B cell (primary cell): ENCODE measurements at regions of chr9 and their contacts with region 1.

Region 1: GRCh38 chr9:133992780-133993634 is 883 bp upstream of the VAV2 start:
- DNase-seq: peak; percentile 90
- ATAC-seq: peak; percentile 79
- H3K4me3 ChIP-seq: peak overlapping the region; percentile 31 to 86 (median 81)
- H3K4me3 Mint-ChIP-seq: peak overlapping the region; percentile 89
- H3K27ac ChIP-seq: peak overlapping the region; percentile 26 to 83
- H3K27ac Mint-ChIP-seq: peak overlapping the region; percentile 86
- H3K4me1 ChIP-seq: peaks cover 27 to 42% of the 10 kb centered on the region in 2 donors
- H3K4me1 Mint-ChIP-seq: peaks cover 30% of the 10 kb centered on the region
- H3K27me3 ChIP-seq: no peaks in the 10 kb centered on the region
- H3K27me3 Mint-ChIP-seq: no peaks in the 10 kb centered on the region
- CTCF ChIP-seq: peak; percentile 53

Region 2: GRCh38 chr9:132994410-132995120 is 998.4 kb before region 1 on chr9:
- CTCF ChIA-PET with region 1: no interaction called
- POLR2A ChIA-PET with region 1: no interaction called
- intact Hi-C with region 1: no loop called
- DNase-seq: no peak
- ATAC-seq: peak; percentile 14
- H3K4me3 ChIP-seq: no peak overlapping the region
- H3K4me3 Mint-ChIP-seq: peak overlapping the region; percentile 11
- H3K27ac ChIP-seq: no peak overlapping the region
- H3K27ac Mint-ChIP-seq: no peak overlapping the region
- H3K4me1 ChIP-seq: peaks cover 4 to 10% of the 10 kb centered on the region in 2 donors
- H3K4me1 Mint-ChIP-seq: peaks cover 13% of the 10 kb centered on the region
- H3K27me3 ChIP-seq: peaks cover 0 to 41% (median 6%) of the 10 kb centered on the region in 4 experiments
- H3K27me3 Mint-ChIP-seq: peaks cover 39% of the 10 kb centered on the region
- CTCF ChIP-seq: no peak

Region 3: GRCh38 chr9:133492061-133493021 is 500.7 kb before region 1 on chr9:
- CTCF ChIA-PET with region 1: no interaction called
- POLR2A ChIA-PET with region 1: no interaction called
- intact Hi-C with region 1: no loop called
- DNase-seq: no peak
- ATAC-seq: no peak
- H3K4me3 ChIP-seq: no peak overlapping the region
- H3K4me3 Mint-ChIP-seq: no peak overlapping the region
- H3K27ac ChIP-seq: no peak overlapping the region
- H3K27ac Mint-ChIP-seq: no peak overlapping the region
- H3K4me1 ChIP-seq: no peaks in the 10 kb centered on the region
- H3K4me1 Mint-ChIP-seq: no peaks in the 10 kb centered on the region
- H3K27me3 ChIP-seq: peaks cover 0 to 10% (median 0%) of the 10 kb centered on the region in 4 experiments
- H3K27me3 Mint-ChIP-seq: peaks cover 12% of the 10 kb centered on the region
- CTCF ChIP-seq: no peak

Region 4: DNA sequence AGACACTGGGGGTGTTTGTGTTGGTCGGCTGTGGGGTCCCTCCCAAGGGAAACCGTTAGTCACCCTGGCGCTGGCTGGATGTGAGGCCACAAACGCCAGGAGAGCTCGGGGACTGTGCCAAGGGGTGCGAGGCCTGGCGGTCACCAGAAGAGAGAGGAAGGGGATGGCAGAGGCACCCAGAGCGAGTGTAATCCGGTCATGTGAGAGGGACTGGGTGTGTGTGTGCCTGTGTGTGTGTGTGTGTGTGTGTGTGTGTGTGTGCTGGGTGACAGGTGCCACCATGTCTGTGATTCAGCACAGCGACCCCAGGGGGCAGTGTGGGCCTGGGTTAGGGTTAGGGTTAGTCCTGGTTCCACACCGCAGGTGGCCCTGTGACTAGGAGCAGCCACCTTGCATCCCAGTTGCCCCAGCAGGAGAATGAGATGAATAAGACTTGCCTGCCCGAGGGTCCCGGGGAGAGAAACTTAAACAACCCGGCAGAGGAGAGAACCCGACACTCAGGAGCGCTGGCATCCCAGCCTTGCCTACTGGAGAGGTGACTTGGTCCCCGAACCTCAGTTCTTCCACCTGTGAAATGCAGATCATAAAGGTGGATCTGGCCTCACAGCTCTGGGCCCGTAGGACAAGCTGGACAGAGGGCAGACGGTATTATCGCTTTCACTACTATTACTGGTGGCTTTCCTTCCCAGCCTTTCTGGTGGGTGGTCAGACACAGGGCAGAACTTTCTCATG is 459.9 kb before region 1 on chr9:
- CTCF ChIA-PET with region 1: no interaction called
- POLR2A ChIA-PET with region 1: no interaction called
- intact Hi-C with region 1: loop called (anchors 5 kb)
- DNase-seq: peak; percentile 65
- ATAC-seq: peak; percentile 79
- H3K4me3 ChIP-seq: no peak overlapping the region
- H3K4me3 Mint-ChIP-seq: peak overlapping the region; percentile 29
- H3K27ac ChIP-seq: no peak overlapping the region
- H3K27ac Mint-ChIP-seq: peak overlapping the region; percentile 15
- H3K4me1 ChIP-seq: peaks cover 7 to 18% of the 10 kb centered on the region in 2 donors
- H3K4me1 Mint-ChIP-seq: peaks cover 13% of the 10 kb centered on the region
- H3K27me3 ChIP-seq: peaks cover 0 to 66% (median 10%) of the 10 kb centered on the region in 4 experiments
- H3K27me3 Mint-ChIP-seq: peaks cover 29% of the 10 kb centered on the region
- CTCF ChIP-seq: no peak

Region 5: DNA sequence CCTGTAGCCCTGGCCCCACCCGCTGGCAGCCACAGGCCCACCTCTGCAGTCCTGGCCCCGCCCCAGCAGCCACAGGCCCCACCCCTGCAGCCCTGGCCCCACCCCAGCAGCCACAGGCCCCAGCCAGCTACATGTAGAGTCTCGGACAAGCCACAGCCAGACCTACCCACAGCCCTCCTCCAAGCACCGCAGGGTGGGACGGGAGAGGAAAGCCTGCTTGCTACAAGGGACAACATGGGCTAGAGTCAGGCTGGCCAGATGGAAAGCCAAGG is 205.3 kb before region 1 on chr9:
- CTCF ChIA-PET with region 1: interaction called, 561 read pairs
- POLR2A ChIA-PET with region 1: interaction called, 18 read pairs
- intact Hi-C with region 1: loop called (anchors 1 kb)
- DNase-seq: peak; percentile 70
- ATAC-seq: peak; percentile 73
- H3K4me3 ChIP-seq: peak overlapping the region in 1 of 5 experiments; percentile 23
- H3K4me3 Mint-ChIP-seq: peak overlapping the region; percentile 84
- H3K27ac ChIP-seq: peak overlapping the region; percentile 87 to 95
- H3K27ac Mint-ChIP-seq: peak overlapping the region; percentile 97
- H3K4me1 ChIP-seq: peaks cover 74 to 78% of the 10 kb centered on the region in 2 donors
- H3K4me1 Mint-ChIP-seq: peaks cover 86% of the 10 kb centered on the region
- H3K27me3 ChIP-seq: no peaks in the 10 kb centered on the region
- H3K27me3 Mint-ChIP-seq: no peaks in the 10 kb centered on the region
- CTCF ChIP-seq: no peak

Region 6: DNA sequence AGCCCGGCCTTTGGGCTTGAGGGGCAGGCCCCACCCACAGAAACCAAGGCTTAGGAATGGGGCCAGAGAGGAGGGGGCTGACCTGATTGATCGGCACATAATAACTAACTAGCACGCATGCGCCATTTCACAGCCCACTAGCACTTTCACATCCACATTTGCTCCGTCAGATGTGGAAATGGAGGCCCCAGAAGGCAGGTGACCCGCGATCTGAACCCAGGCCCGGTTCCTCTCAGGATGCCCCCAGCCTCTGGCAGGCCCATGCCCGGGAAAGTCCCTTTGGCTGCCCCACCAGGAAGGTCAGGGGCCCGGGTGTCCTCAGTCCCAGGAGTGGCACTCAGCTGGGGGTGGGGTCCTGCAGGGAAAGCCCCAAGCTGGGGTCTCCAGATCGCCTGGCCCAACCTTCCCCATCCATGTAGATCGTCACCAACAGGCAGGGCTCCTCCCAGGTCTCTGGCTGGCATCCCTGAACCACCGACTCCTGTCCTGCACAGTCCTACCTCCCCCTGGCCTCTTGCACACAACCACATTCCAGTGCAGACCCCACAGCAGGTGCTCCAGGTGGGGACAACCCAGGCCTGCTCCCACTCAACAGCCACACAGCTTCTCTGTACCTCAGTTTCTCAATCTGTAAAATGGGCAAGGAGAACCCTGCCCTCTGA is 47.6 kb before region 1 on chr9:
- CTCF ChIA-PET with region 1: interaction called, 43 read pairs
- POLR2A ChIA-PET with region 1: interaction called, 5 read pairs
- intact Hi-C with region 1: loop called (anchors 1 kb)
- DNase-seq: peak; percentile 90
- ATAC-seq: peak; percentile 74
- H3K4me3 ChIP-seq: peak overlapping the region in 3 of 5 experiments; percentile 1 to 44 (median 25)
- H3K4me3 Mint-ChIP-seq: peak overlapping the region; percentile 89
- H3K27ac ChIP-seq: peak overlapping the region; percentile 75 to 83
- H3K27ac Mint-ChIP-seq: peak overlapping the region; percentile 97
- H3K4me1 ChIP-seq: peaks cover 34 to 64% of the 10 kb centered on the region in 2 donors
- H3K4me1 Mint-ChIP-seq: peaks cover 78% of the 10 kb centered on the region
- H3K27me3 ChIP-seq: no peaks in the 10 kb centered on the region
- H3K27me3 Mint-ChIP-seq: no peaks in the 10 kb centered on the region
- CTCF ChIP-seq: no peak

Region 7: DNA sequence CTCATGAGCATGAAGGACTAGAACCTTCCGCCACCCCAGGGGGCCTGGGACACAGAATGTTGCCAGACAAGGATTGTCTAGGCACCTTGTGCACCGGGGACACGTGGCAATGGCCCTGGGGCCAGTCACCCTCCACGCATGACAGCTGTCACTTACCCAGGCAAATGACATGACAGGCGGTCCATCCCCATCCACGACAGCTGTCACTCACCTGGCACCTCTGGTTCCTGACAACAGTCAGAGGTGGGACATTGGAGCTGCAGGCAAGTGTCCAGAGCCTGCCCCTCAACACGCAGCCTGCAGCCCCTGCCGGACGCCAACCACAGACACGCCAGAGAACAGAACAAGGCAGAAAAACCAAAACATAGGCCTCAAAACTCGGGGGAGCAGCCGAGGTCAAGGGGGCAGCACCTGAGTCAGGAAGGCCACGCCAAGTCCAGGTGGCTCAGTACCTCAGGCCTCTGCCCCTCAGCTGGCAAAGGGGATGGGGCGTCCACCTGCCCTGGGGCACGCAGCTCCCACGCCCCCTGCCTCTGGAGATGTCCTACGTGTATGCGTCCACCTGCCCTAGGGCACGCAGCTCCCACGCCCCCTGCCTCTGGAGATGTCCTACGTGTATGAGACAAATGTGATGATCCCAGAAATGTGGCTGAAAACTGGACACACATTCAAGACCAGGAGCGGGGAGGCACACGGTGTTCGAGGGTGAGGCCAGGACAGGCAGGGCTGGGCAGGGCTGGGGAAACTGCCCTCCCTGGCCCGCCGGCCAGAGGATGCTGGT is 15.4 kb before region 1 on chr9:
- CTCF ChIA-PET with region 1: interaction called, 10 read pairs
- POLR2A ChIA-PET with region 1: interaction called, 3 read pairs
- intact Hi-C with region 1: no loop called
- DNase-seq: no peak
- ATAC-seq: no peak
- H3K4me3 ChIP-seq: no peak overlapping the region
- H3K4me3 Mint-ChIP-seq: no peak overlapping the region
- H3K27ac ChIP-seq: peak overlapping the region in 1 of 2 donors; percentile 3
- H3K27ac Mint-ChIP-seq: peak overlapping the region; percentile 69
- H3K4me1 ChIP-seq: peaks cover 72% of the 10 kb centered on the region in 2 donors
- H3K4me1 Mint-ChIP-seq: peaks cover 85% of the 10 kb centered on the region
- H3K27me3 ChIP-seq: no peaks in the 10 kb centered on the region
- H3K27me3 Mint-ChIP-seq: no peaks in the 10 kb centered on the region
- CTCF ChIP-seq: no peak

Region 8: GRCh38 chr9:134040176-134040565 is 47.2 kb after region 1 on chr9:
- CTCF ChIA-PET with region 1: no interaction called
- POLR2A ChIA-PET with region 1: no interaction called
- intact Hi-C with region 1: no loop called
- DNase-seq: no peak
- ATAC-seq: no peak
- H3K4me3 ChIP-seq: no peak overlapping the region
- H3K4me3 Mint-ChIP-seq: no peak overlapping the region
- H3K27ac ChIP-seq: no peak overlapping the region
- H3K27ac Mint-ChIP-seq: no peak overlapping the region
- H3K4me1 ChIP-seq: no peaks in the 10 kb centered on the region
- H3K4me1 Mint-ChIP-seq: no peaks in the 10 kb centered on the region
- H3K27me3 ChIP-seq: no peaks in the 10 kb centered on the region
- H3K27me3 Mint-ChIP-seq: no peaks in the 10 kb centered on the region
- CTCF ChIP-seq: no peak

Region 9: DNA sequence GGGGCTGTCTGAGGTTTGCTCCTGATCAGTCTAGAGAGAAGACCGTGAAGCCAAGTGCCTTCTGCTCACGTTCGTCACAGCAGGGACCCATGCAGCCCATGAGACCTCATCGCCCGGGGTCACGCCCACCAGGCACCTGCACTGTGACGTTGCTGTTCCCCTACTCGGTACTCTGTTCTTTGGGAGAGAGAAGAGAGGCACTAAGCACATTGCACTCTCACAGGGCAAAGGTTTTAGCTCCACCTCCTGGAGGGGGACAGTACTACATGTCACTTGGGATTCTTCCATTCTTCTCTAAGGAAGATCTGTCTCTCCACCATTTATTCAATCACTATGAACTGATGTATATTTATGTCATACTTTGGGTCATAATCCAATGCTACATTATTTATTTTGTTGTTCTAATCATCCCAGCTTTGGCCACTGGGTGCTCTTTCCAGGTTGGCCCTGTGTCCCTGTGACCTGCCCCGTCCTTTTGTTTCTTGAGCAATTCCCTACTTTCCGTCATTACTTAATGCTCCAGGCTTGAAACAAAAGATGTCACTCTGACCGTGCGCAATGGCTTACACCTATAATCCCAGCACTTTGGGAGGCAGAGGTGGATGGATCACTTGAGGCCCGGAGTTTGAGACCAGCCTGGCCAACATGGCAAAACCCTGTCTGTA is 106.2 kb after region 1 on chr9:
- CTCF ChIA-PET with region 1: interaction called, 15 read pairs
- POLR2A ChIA-PET with region 1: no interaction called
- intact Hi-C with region 1: no loop called
- DNase-seq: peak; percentile 80
- ATAC-seq: peak; percentile 92
- H3K4me3 ChIP-seq: no peak overlapping the region
- H3K4me3 Mint-ChIP-seq: no peak overlapping the region
- H3K27ac ChIP-seq: no peak overlapping the region
- H3K27ac Mint-ChIP-seq: no peak overlapping the region
- H3K4me1 ChIP-seq: no peaks in the 10 kb centered on the region
- H3K4me1 Mint-ChIP-seq: peaks cover 4% of the 10 kb centered on the region
- H3K27me3 ChIP-seq: peaks cover 0 to 3% (median 2%) of the 10 kb centered on the region in 4 experiments
- H3K27me3 Mint-ChIP-seq: peaks cover 21% of the 10 kb centered on the region
- CTCF ChIP-seq: peak; percentile 88